Activated B cell treated with CpG ODN at 0.5 μM for 24 hours (primary cell): ENCODE measurements at regions of chr18 and their contacts with region 1.

Region 1: DNA sequence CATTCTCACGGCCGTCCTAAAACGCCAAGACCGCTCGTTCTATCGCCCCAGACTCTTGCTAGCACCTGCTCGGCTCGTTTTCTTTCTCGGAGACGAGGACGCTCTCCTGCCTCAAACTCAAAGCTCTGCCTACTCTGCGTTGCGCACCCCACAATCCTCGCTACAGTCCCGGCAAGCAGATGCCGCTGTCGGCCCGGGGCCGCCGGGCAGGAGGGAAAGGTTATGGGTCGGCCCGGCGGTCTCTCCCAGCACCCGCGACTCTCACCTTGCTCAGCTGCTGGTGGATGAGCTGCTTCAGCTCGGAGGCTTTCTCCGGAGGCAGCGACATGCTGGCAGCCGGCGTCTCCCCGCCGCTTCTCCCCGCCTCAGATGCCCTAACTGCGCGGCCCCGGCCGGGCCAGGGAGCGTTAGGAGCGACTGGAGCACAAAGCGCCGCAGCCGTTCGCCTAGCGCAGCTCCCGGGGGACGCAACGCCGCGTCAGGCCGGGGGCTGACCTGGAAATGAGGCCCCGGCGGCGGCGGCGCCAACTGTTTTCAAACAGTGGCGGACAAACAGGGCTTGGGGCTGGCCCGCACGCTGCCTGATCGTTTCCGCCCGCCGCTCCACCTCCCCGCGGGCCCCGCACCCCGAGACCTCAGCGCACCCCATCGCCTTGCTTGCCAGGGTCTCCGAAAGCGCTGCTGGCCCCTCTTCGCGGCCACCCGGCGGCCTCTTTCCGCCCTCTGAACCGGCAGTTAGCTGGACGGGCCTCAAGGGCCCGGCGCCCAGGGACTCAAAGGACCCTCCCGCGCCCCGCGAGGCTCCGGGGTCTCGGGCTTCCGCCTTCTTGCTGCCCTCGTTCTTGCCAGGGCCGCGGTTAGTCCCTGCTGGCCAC is at the starts of genes CEP76 and PSMG2:
- DNase-seq: peak; percentile 90
- ATAC-seq: peak; percentile 88
- H3K4me3 Mint-ChIP-seq: peak within 1 kb of the TSS; percentile 99
- H3K27ac Mint-ChIP-seq: peak within 1 kb of the TSS; percentile 99
- H3K4me1 Mint-ChIP-seq: peaks cover 38% of the 10 kb centered on the region
- H3K27me3 Mint-ChIP-seq: no peaks in the 10 kb centered on the region
- CTCF ChIP-seq: no peak
- total RNA-seq, gene CEP76: 6.4 and 6.9 TPM in 2 replicates
- total RNA-seq, gene PSMG2: 67.4 and 69.1 TPM in 2 replicates

Region 2: GRCh38 chr18:11908182-11909060 is 794.0 kb before region 1 on chr18 and contains the start of gene MPPE1:
- CTCF ChIA-PET with region 1: no interaction called
- POLR2A ChIA-PET with region 1: no interaction called
- intact Hi-C with region 1: loop called (anchors 1 kb)
- DNase-seq: peak; percentile 87
- ATAC-seq: peak; percentile 91
- H3K4me3 Mint-ChIP-seq: peak within 1 kb of the TSS; percentile 94
- H3K27ac Mint-ChIP-seq: peak within 1 kb of the TSS; percentile 94
- H3K4me1 Mint-ChIP-seq: peaks cover 25% of the 10 kb centered on the region
- H3K27me3 Mint-ChIP-seq: no peaks in the 10 kb centered on the region
- CTCF ChIP-seq: no peak
- total RNA-seq, gene MPPE1: 39.0 and 52.9 TPM in 2 replicates

Region 3: DNA sequence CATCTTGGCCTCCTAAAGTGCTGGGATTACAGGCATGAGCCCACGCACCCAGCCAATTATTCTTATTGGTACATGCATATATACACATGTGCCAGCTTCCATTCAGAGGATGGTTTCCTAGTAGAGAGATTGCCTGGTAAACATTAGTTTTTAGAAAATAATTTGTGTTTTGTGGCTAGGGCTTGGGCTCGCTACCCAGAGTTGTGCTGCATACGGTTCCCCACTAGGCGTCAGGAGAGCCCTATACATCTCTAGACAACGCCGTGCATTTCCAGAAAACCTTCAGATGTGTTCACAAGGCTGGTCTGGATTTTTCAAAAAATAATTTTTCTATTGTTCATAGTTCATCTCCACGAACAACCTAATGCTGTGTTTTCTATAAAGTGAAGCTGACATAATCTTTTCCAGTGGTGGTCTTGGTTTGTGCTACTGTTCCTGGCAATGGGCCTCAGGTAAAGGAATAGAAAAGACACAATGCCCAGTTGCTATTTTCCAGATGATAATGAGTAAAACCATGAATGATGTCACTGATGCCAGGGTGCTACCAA is 310.8 kb before region 1 on chr18:
- CTCF ChIA-PET with region 1: interaction called, 3 read pairs
- POLR2A ChIA-PET with region 1: interaction called, 3 read pairs
- intact Hi-C with region 1: loop called (anchors 1 kb)
- DNase-seq: no peak
- ATAC-seq: peak; percentile 98
- H3K4me3 Mint-ChIP-seq: no peak overlapping the region
- H3K27ac Mint-ChIP-seq: no peak overlapping the region
- H3K4me1 Mint-ChIP-seq: no peaks in the 10 kb centered on the region
- H3K27me3 Mint-ChIP-seq: peaks cover 13% of the 10 kb centered on the region
- CTCF ChIP-seq: no peak

Region 4: GRCh38 chr18:12637901-12638633 is 64.4 kb before region 1 on chr18:
- CTCF ChIA-PET with region 1: no interaction called
- POLR2A ChIA-PET with region 1: no interaction called
- intact Hi-C with region 1: no loop called
- DNase-seq: no peak
- ATAC-seq: no peak
- H3K4me3 Mint-ChIP-seq: no peak overlapping the region
- H3K27ac Mint-ChIP-seq: no peak overlapping the region
- H3K4me1 Mint-ChIP-seq: no peaks in the 10 kb centered on the region
- H3K27me3 Mint-ChIP-seq: peaks cover 12% of the 10 kb centered on the region
- CTCF ChIP-seq: no peak

Region 5: GRCh38 chr18:12657684-12658425 is 44.6 kb before region 1 on chr18 and contains the start of gene SPIRE1:
- CTCF ChIA-PET with region 1: no interaction called
- POLR2A ChIA-PET with region 1: no interaction called
- intact Hi-C with region 1: loop called (anchors 2 kb)
- DNase-seq: peak; percentile 52
- ATAC-seq: peak; percentile 74
- H3K4me3 Mint-ChIP-seq: peak within 1 kb of the TSS; percentile 86
- H3K27ac Mint-ChIP-seq: peak within 1 kb of the TSS; percentile 69
- H3K4me1 Mint-ChIP-seq: peaks cover 10% of the 10 kb centered on the region
- H3K27me3 Mint-ChIP-seq: peaks cover 28% of the 10 kb centered on the region
- CTCF ChIP-seq: no peak
- total RNA-seq, gene SPIRE1: 2.5 and 2.9 TPM in 2 replicates

Region 6: DNA sequence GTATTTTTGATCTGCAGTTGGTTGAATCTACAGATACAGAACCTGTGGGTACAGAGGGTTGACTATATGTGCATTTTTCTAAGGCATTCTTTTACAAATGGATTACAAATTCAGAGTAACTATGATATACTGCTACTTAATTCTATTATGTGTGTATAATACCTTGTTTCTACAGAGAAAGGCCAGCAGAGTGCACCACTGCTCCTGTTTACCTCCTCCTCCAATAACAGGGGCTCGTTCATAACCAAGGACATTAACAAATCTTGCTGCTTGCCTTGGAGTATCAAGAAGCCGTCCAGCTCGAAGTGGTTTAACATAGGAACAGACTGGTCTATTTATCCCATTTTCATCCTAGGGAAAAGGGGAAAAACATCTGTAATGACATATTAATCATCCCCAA is 16.4 kb before region 1 on chr18:
- CTCF ChIA-PET with region 1: no interaction called
- POLR2A ChIA-PET with region 1: no interaction called
- intact Hi-C with region 1: no loop called
- DNase-seq: no peak
- ATAC-seq: no peak
- H3K4me3 Mint-ChIP-seq: no peak overlapping the region
- H3K27ac Mint-ChIP-seq: no peak overlapping the region
- H3K4me1 Mint-ChIP-seq: no peaks in the 10 kb centered on the region
- H3K27me3 Mint-ChIP-seq: no peaks in the 10 kb centered on the region
- CTCF ChIP-seq: no peak

Region 7: GRCh38 chr18:12990967-12991838 is 288.7 kb after region 1 on chr18 and contains the start of gene CEP192:
- CTCF ChIA-PET with region 1: no interaction called
- POLR2A ChIA-PET with region 1: interaction called, 13 read pairs
- intact Hi-C with region 1: loop called (anchors 1 kb)
- DNase-seq: peak; percentile 93
- ATAC-seq: peak; percentile 96
- H3K4me3 Mint-ChIP-seq: peak within 1 kb of the TSS; percentile 93
- H3K27ac Mint-ChIP-seq: peak within 1 kb of the TSS; percentile 94
- H3K4me1 Mint-ChIP-seq: peaks cover 32% of the 10 kb centered on the region
- H3K27me3 Mint-ChIP-seq: no peaks in the 10 kb centered on the region
- CTCF ChIP-seq: no peak
- total RNA-seq, gene CEP192: 33.6 and 34.2 TPM in 2 replicates